Prostate gland (tissue), 2 donors: ENCODE measurements at regions of chr6 and their contacts with region 1.

Region 1: DNA sequence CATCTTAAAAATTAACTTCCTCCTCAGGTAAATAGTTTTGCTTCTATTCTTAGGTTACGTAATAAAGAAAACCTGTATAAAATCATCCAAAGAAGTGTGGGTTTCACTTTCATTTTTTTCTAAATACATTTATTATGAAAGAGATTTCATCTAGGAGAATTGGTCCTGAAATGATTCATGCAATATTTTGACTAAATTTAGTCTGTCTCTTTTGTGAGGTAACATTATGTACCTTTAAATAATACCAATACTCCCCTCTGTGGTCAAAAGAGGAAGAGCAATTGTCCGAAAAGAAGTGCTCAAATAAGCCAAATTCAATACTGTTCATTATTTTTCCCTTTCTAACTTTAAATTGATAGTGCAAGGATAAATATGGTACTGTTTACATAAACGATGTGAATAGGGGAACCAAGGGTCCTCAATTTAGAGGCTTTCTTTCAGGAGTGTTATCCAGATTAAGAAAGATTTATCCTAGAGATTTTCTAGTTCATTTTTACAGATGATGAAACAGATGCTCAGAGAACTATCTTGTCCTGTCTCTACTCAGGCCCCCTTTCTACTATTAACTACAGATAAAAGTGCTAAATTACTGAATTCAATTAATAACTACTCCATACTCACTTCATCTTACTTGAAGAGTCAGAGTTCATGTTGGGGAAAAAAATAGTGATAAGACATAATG is 26.2 kb downstream of the CYP39A1 start:
- DNase-seq: no peak
- H3K4me3 ChIP-seq: no peak overlapping the region
- H3K27ac ChIP-seq: no peak overlapping the region
- H3K4me1 ChIP-seq: no peaks in the 10 kb centered on the region
- H3K27me3 ChIP-seq: no peaks in the 10 kb centered on the region
- CTCF ChIP-seq: peak; percentile 31 to 75 (median 62)
- POLR2A ChIP-seq: no peak

Region 2: GRCh38 chr6:46090115-46091079 is 536.0 kb before region 1 on chr6:
- intact Hi-C with region 1: loop called (anchors 2 kb)
- DNase-seq: peak; percentile 57
- H3K4me3 ChIP-seq: no peak overlapping the region
- H3K27ac ChIP-seq: no peak overlapping the region
- H3K4me1 ChIP-seq: no peaks in the 10 kb centered on the region
- H3K27me3 ChIP-seq: no peaks in the 10 kb centered on the region
- CTCF ChIP-seq: peak; percentile 64 to 87 (median 72)
- POLR2A ChIP-seq: no peak

Region 3: GRCh38 chr6:46419576-46420002 is 206.8 kb before region 1 on chr6:
- intact Hi-C with region 1: loop called (anchors 2 kb)
- DNase-seq: peak; percentile 62
- H3K4me3 ChIP-seq: no peak overlapping the region
- H3K27ac ChIP-seq: no peak overlapping the region
- H3K4me1 ChIP-seq: no peaks in the 10 kb centered on the region
- H3K27me3 ChIP-seq: no peaks in the 10 kb centered on the region
- CTCF ChIP-seq: peak; percentile 37 to 84 (median 74)
- POLR2A ChIP-seq: no peak

Region 4: DNA sequence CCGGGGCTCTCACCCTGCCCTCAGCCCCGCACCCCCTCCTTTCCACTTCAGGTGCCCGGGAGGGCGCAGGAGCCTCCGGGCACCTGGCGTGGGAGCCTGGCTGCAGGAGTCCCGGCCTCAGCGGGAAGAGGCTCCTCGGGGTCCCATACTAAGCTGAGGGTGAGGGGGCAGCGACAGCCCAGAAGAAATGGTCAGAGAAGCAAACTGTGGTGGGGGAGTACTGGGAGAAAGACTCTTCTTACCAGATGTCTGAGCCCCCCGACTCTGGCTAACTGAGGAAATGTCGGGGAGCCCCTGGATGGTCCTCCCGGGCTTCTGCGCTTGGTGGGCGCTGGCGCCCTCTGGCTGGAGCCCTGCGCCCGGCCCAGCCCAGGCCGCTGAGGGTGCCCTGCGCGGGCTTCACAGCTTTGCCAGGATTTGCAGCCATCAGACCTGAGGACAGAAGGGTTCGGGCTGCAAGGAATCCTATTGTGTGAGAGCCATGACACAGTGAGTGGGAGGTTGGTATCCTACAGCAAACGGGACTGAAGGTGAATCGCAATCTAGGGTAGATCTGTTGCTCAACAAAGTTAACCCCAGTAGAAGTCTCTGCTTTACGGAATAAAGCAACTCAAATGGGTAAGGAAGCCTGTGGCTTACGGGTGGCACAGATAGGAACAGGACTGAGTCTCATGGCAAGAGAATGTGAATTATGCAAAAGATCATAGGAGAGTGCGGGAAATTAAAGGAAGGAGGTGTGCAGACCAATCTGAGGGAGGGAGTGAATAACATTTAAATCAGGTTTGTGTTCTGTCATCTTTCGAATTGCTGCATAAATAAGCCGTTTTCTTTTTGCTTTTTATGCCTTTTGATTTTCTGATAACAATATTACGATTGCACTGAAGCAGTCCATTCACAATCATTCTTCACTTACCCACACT is 134.5 kb before region 1 on chr6:
- intact Hi-C with region 1: loop called (anchors 5 kb)
- DNase-seq: peak; percentile 32
- H3K4me3 ChIP-seq: peak overlapping the region; percentile 50 to 64
- H3K27ac ChIP-seq: peak overlapping the region; percentile 67 to 78
- H3K4me1 ChIP-seq: no peaks in the 10 kb centered on the region
- H3K27me3 ChIP-seq: no peaks in the 10 kb centered on the region
- CTCF ChIP-seq: peak in 3 of 4 experiments; percentile 56 to 74 (median 60)
- POLR2A ChIP-seq: no peak